HEK293 (cell line): ENCODE measurements at regions of chr6 and their contacts with region 1.

Region 1: GRCh38 chr6:75208298-75209183 is 2.7 kb upstream of the COL12A1 start:
- H3K4me3 ChIP-seq: no peak overlapping the region
- H3K27ac ChIP-seq: no peak overlapping the region
- H3K4me1 ChIP-seq: peaks cover 12% of the 10 kb centered on the region
- CTCF ChIP-seq: peak; percentile 78

Region 2: GRCh38 chr6:73675466-73676098 is 1533.0 kb before region 1 on chr6:
- CTCF ChIA-PET with region 1: interaction called, 11 read pairs
- POLR2A ChIA-PET with region 1: no interaction called
- H3K4me3 ChIP-seq: no peak overlapping the region
- H3K27ac ChIP-seq: no peak overlapping the region
- H3K4me1 ChIP-seq: no peaks in the 10 kb centered on the region
- CTCF ChIP-seq: peak; percentile 67

Region 3: DNA sequence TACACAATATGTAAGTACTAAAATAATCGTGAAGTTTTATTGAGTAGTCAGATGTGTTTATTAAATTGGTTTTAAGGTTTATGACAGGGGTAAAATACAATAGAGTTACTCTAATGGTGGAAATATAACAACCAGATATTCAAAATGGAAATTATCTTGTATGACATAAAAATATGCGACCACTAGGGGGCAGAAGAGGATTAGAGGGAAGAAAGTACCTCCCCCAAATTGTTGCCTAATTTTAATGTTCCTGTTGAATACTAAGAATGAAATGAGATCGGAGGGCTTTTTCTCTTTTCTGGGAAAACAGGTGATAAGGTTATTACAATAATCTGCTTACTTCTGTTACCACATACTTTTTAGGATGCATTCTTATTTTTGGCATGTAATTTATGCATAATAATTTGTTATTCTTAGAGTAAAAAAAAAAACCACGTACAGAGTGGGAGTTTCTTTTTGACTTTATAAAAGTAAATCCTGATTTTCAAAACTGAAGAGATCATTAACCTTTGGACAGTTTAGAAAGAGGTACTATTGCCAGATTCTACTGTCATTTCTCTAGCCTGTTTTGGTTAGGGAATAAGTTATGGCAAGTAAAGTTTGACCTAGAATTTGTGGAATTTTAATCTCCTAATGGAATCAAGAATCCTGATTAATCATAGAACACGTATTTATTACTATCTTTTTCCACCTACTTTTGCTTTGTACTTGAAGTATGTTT is 1353.4 kb before region 1 on chr6:
- CTCF ChIA-PET with region 1: interaction called, 32 read pairs
- POLR2A ChIA-PET with region 1: no interaction called
- H3K4me3 ChIP-seq: no peak overlapping the region
- H3K27ac ChIP-seq: no peak overlapping the region
- H3K4me1 ChIP-seq: no peaks in the 10 kb centered on the region
- CTCF ChIP-seq: no peak

Region 4: DNA sequence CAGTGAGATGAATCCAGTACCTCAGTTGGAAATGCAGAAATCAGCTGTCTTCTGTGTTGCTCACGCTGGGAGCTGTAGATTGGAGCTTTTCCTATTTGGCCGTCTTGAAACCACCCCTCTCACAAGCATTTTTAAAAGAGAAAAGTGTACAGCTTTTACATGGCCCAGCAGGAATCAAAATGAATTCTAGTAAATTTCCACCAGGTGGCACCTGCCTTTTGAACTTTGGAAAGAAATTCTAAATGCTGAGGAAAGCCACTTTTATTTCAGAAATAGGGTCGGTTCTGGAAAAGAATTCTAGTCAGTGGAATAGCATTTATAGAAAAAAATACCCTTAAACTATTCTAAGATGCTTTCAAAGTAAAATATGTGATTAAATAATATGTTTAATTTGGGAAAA is 864.7 kb before region 1 on chr6:
- CTCF ChIA-PET with region 1: interaction called, 14 read pairs
- POLR2A ChIA-PET with region 1: no interaction called
- H3K4me3 ChIP-seq: no peak overlapping the region
- H3K27ac ChIP-seq: no peak overlapping the region
- H3K4me1 ChIP-seq: no peaks in the 10 kb centered on the region
- CTCF ChIP-seq: no peak

Region 5: DNA sequence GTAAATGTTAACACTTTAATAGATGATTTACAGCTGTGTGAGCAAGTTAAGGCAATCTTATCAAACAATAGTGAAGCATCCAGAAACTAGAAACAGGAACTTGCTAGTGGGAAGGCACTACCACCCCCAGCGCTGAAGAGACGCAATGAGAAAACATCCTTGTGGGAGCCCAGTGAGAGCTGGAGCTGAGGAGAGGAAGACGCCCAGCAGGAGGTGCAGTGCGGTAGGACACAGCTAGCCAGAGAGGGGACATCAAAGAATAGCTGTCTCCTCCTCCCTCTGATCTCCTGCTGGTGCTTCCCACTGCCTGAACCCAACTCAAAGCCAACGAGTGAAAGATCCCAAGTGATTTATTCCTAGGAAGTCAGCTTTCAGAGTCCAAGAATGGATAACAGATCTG is 143.0 kb before region 1 on chr6:
- CTCF ChIA-PET with region 1: interaction called, 10 read pairs
- POLR2A ChIA-PET with region 1: no interaction called
- H3K4me3 ChIP-seq: no peak overlapping the region
- H3K27ac ChIP-seq: no peak overlapping the region
- H3K4me1 ChIP-seq: no peaks in the 10 kb centered on the region
- CTCF ChIP-seq: no peak

Region 6: DNA sequence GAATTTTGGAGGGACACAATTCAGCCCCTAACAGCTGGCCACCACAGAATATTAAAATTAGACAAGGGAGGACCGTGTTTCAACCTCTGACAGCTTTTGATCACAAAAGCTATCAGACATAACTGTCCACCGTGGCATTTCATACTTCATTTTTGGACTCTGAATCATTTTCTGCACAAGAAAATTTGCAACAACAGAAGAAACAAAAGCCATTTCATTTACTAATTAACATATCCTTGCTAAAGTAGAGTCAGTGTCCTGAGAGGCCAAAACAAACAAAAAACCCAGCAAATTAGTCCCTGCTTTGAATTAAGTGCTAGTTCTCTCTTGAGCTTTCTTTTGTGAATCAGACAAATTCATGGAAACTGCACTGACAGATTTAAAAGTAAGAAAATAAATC is 14.9 kb after region 1 on chr6:
- CTCF ChIA-PET with region 1: interaction called, 87 read pairs
- POLR2A ChIA-PET with region 1: interaction called, 3 read pairs
- H3K4me3 ChIP-seq: no peak overlapping the region
- H3K27ac ChIP-seq: no peak overlapping the region
- H3K4me1 ChIP-seq: peaks cover 9% of the 10 kb centered on the region
- CTCF ChIP-seq: no peak

Region 7: GRCh38 chr6:75526502-75527127 is 318.1 kb after region 1 on chr6:
- CTCF ChIA-PET with region 1: interaction called, 46 read pairs
- POLR2A ChIA-PET with region 1: no interaction called
- H3K4me3 ChIP-seq: no peak overlapping the region
- H3K27ac ChIP-seq: no peak overlapping the region
- H3K4me1 ChIP-seq: peaks cover 20% of the 10 kb centered on the region
- CTCF ChIP-seq: peak; percentile 51